GM18951 (cell line): ENCODE measurements at regions of chr13 and their contacts with region 1.

Region 1: GRCh38 chr13:48579165-48579918 is 46.5 kb upstream of the RCBTB2 start:
- POLR2A ChIP-seq: peak; percentile 34

Region 2: DNA sequence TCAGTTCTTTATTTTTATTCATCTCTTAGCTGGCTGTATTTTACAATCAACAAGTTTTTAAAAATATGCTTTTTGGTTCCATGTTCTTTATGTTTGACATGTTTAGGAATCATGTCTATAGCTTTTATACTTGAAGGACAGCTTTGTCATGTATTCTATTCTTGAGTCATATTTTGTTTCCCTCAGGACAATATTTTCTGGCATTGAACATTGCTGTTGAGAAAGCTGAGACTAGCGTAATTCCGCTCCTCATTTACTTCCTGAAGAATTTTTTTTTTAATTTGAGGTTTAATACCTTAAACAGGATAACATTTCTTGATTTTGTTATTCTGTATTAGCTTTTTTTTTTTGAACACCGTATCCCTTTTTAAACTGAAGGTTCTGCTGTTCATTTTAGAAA is 222.6 kb before region 1 on chr13:
- in situ Hi-C with region 1: no loop called
- POLR2A ChIP-seq: no peak

Region 3: DNA sequence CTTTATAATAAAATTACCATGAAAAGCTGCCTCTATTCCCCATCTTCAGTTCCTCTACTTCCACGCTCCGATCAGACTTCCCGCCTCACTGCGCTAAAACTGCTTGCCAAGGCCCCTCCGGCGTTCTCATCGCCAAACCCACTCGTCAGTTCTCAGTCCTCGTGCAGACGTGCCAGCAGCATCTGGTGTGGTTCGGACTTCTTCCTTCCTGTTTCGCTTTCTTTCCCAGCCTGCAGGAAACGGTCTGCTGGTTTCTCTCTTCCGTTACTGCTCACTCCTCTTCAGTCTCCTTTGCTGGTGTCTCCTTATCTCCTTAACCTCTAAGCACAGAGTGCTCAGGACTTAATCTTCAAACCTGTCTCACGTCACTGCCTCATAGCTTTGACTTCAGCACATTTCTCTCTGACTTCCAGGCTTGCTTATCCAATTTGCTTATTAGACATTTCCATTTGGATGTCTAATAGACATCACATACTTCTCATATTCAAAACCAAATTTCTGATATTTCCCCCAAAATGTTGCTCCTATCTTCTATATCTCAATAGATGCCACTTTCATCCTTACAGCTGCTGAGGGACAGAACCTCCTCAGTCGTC is 86.8 kb before region 1 on chr13:
- in situ Hi-C with region 1: loop called (anchors 10 kb)
- POLR2A ChIP-seq: peak; percentile 71

Region 4: DNA sequence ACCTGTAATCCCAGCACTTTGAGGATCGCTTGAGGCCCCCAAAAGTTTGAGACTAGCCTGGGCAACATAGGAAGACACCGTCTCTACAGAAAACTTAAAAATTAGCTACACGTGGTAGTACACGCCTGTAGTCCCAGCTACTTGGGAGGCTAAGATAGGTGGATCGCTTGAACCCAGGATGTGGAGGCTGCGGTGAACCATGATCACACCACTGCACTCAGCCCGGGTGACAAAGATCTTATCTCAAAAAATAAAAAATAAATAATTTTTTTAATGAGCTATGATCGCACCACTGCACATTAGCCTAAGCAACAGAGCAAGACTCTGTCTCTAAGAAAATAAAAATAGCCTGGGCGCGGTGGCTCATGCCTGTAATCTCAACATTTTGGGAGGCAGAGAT is 53.1 kb before region 1 on chr13:
- in situ Hi-C with region 1: loop called (anchors 5 kb)
- POLR2A ChIP-seq: no peak